ENCODE measurements at regions of chr15 and their contacts with region 1.

Region 1: DNA sequence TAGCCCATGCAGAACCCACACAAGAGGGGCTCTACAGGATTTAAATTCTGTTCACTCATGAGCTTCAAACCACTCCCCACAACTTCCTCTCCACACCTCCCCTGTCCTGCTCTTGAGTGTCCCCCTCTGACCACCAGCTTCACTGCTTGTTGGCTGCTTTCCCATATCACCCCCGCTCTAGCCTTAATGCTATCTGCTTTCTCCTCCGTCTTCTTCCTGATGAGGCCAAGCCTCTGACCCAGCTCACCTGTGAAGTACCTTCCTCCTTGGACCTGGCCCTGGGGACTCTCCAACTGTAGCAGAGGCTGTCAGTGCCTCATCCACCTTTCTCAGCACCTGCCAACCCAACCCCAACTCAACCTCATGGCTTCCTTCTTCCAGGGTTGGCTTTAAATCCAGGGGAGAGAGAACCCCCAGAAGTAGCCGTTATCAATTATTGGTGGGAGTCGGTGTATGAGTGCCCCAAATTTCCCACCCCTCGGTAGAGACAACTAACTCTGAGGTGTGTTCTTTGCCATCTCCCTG is 174.8 kb downstream of the MINAR1 start:
- DNase-seq: no peak
- H3K4me3 ChIP-seq: no peak overlapping the region
- H3K27ac ChIP-seq: no peak overlapping the region
- H3K4me1 ChIP-seq: no peaks in the 10 kb centered on the region
- H3K27me3 ChIP-seq: no peaks in the 10 kb centered on the region
- CTCF ChIP-seq: no peak
- POLR2A ChIP-seq: no peak

Region 2: DNA sequence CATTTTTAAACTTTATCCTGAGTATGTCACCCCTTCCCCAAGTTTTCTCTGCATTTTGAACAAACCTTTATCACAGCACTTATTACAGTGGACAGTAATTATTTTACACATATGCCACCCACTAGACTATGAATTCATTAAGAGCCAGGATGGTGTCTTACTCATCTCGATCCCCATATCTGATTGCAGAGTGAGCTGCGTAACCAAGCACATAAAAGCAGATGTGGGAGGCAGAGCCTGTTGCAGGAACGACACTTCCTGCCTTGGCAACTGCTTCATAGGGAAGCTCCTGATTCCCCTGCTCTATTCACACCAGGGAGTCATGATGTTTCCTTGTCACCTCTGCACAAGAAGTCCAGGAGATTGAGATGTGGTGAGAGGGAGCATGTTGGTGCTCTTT is 83.6 kb before region 1 on chr15:
- CTCF ChIA-PET with region 1: no interaction called
- POLR2A ChIA-PET with region 1: no interaction called
- dilution Hi-C with region 1: no loop called
- intact Hi-C with region 1: no loop called
- DNase-seq: no peak
- H3K4me3 ChIP-seq: no peak overlapping the region
- H3K27ac ChIP-seq: no peak overlapping the region
- H3K4me1 ChIP-seq: no peaks in the 10 kb centered on the region
- H3K27me3 ChIP-seq: no peaks in the 10 kb centered on the region
- CTCF ChIP-seq: no peak
- POLR2A ChIP-seq: no peak

Region 3: GRCh38 chr15:79596051-79596507 is 10.8 kb before region 1 on chr15:
- CTCF ChIA-PET with region 1: interaction called, 12 read pairs
- POLR2A ChIA-PET with region 1: no interaction called
- dilution Hi-C with region 1: no loop called
- intact Hi-C with region 1: no loop called
- DNase-seq: peak; percentile 64
- H3K4me3 ChIP-seq: no peak overlapping the region
- H3K27ac ChIP-seq: no peak overlapping the region
- H3K4me1 ChIP-seq: no peaks in the 10 kb centered on the region
- H3K27me3 ChIP-seq: no peaks in the 10 kb centered on the region
- CTCF ChIP-seq: peak; percentile 79 to 94
- POLR2A ChIP-seq: no peak